Aorta (tissue), 5 donors: ENCODE measurements at regions of chr14 and their contacts with region 1.

Region 1: DNA sequence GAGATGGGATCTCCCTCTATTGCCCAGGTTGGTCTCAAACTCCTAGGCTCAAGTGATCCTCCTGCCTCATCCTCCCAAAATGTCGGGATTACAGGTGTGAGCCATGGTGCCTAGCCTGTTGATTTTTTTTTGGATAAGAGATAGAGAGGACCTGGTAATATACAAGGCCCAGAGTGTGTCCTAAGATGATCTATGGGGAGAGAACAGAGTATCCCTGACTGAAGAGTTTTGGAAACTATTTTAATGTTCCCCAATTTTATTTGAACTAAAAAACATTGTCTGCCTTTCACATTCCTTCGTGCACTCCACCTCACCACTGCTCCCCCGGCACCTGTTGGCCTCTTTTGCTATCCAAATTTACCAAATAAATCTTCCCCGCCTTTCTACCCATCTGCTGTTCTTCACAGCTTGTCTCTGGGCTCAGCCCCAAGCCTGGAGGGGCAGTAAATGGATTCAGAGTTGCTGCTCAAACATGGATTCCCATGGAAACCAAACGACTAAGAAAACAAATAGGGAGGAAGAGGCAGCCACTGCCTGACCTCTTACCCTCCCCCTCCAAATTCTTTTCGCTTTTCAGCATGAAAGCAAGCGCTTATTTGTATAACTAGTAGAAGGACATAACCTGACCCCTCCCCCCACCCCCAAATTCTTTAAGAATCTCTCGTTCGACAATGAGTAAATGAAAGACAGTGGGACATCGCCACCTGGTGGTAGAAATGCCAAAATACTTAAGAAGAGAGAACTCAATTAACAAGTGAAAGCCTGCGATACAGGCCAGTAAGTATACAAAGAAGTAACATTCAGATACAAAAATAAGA is 22.6 kb downstream of the OR10G3 start:
- DNase-seq: peak in 1 of 2 donors; percentile 56
- ATAC-seq: peak; percentile 88
- H3K4me3 ChIP-seq: peak overlapping the region; percentile 26 to 57
- H3K27ac ChIP-seq: no peak overlapping the region
- H3K4me1 ChIP-seq: no peaks in the 10 kb centered on the region
- H3K27me3 ChIP-seq: no peaks in the 10 kb centered on the region

Region 2: GRCh38 chr14:21203470-21204166 is 353.7 kb before region 1 on chr14:
- intact Hi-C with region 1: no loop called
- DNase-seq: no peak
- ATAC-seq: no peak
- H3K4me3 ChIP-seq: no peak overlapping the region
- H3K27ac ChIP-seq: no peak overlapping the region
- H3K4me1 ChIP-seq: peaks cover 0 to 2% of the 10 kb centered on the region in 2 donors
- H3K27me3 ChIP-seq: no peaks in the 10 kb centered on the region

Region 3: DNA sequence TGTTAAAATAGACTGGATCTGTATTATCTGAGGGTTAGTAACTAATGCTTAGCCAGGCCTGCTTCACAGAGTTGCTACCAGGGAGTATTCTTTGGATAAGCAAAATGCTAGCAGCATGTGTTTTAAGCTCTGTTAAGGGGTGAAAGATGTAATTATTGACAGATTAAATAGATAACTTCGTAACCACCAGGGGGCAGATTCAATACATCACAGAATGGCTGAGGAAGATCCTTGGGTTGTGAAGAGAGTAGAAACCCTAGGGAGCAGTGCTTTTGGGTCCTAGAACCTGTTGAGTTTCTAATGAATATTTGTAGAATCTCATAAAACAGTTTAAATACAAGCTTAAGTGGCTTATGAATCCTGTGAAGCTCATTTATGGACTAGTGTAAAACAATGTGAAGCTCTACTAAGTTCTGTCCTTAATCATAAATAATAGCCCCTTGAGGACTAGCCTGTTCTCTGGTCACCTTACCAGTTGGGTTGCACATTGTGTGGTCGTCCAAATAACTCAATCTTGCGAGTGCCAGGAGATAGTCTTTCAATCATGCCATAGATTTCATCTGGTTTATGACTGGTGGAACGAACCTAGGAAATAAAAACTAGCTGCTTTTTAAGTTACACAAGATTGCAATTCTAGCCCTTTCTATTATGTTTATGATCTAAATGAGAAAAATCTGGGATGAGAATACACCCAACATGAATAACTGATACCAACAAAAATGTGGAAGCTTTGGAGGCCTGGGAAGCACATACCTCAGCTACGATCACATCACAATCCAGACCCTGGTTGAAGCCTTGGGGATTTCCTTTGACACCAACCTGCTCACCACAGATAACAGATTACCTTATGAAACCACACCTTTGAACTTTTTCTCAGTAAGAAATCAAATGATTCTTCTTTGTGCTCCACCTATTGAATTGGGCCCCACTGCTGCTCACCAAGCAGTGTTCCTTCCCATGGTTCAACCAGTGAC is 58.5 kb before region 1 on chr14:
- intact Hi-C with region 1: loop called in 1 of 2 experiments (anchors 2 kb)
- DNase-seq: no peak
- ATAC-seq: no peak
- H3K4me3 ChIP-seq: no peak overlapping the region
- H3K27ac ChIP-seq: no peak overlapping the region
- H3K4me1 ChIP-seq: no peaks in the 10 kb centered on the region
- H3K27me3 ChIP-seq: no peaks in the 10 kb centered on the region